Activated T-helper 1 cell treated with anti-CD3 and anti-CD28 coated beads, Interleukin-12 subunit alpha, Interleukin-12 subunit beta, Interleukin-2, Interleukin-4 antibody, amounts not matched to agents 30 ng/mL and 10 ng/mL and 1 ng/mL, durations not matched to agents 14 hours and 24 hours and 36 hours (primary cell): ENCODE measurements at regions of chr10 and their contacts with region 1.

Region 1: DNA sequence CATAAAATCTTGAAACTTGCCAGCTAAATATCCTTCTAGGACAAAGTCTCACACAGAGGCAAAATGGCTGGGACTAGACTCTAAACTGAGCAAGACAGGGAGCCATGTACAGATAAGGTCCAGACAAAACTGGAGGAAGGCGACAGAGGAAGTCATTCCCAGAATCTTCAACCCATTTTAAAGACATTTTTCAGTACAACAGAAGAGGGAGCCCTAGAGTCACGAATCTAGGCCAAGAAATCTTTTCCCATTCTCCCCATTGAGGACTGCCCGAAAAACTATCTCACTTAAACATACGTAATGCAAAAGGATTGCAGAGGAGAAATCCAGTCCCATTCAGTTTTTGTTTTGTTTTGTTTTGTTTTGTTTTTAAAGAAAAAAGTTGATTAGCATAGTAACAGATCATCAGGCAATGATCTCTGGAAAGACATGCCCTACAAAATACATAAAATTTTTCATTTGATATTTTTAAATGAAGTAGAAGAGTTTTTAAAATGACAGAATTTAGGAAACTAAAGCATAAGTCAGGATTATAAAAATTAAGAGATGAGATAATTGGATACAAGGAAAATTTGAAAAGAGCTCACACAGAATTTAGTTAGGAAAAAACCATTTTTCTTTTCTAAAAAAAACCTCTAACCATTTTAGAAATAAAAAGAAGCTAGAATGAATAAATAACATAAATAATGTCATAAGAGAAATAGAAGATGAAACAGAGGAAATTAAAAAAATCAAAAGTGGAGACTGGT is 16.9 kb upstream of the PRF1 start:
- DNase-seq: no peak
- H3K4me3 Mint-ChIP-seq: no peak overlapping the region
- H3K27ac Mint-ChIP-seq: peak overlapping the region; percentile 88
- H3K4me1 Mint-ChIP-seq: peaks cover 44% of the 10 kb centered on the region
- H3K27me3 Mint-ChIP-seq: peaks cover 7% of the 10 kb centered on the region

Region 2: GRCh38 chr10:70440296-70441160 is 178.9 kb before region 1 on chr10:
- intact Hi-C with region 1: no loop called
- DNase-seq: no peak
- H3K4me3 Mint-ChIP-seq: peak overlapping the region; percentile 4
- H3K27ac Mint-ChIP-seq: no peak overlapping the region
- H3K4me1 Mint-ChIP-seq: peaks cover 7% of the 10 kb centered on the region
- H3K27me3 Mint-ChIP-seq: peaks cover 52% of the 10 kb centered on the region

Region 3: GRCh38 chr10:70478191-70479164 is 141.0 kb before region 1 on chr10 and contains the start of gene PALD1:
- intact Hi-C with region 1: loop called (anchors 5 kb)
- DNase-seq: no peak
- H3K4me3 Mint-ChIP-seq: peak within 1 kb of the TSS; percentile 78
- H3K27ac Mint-ChIP-seq: peak within 1 kb of the TSS; percentile 85
- H3K4me1 Mint-ChIP-seq: peaks cover 49% of the 10 kb centered on the region
- H3K27me3 Mint-ChIP-seq: peaks cover 59% of the 10 kb centered on the region
- total RNA-seq, gene PALD1: 0.83 and 0.88 TPM in 2 replicates

Region 4: DNA sequence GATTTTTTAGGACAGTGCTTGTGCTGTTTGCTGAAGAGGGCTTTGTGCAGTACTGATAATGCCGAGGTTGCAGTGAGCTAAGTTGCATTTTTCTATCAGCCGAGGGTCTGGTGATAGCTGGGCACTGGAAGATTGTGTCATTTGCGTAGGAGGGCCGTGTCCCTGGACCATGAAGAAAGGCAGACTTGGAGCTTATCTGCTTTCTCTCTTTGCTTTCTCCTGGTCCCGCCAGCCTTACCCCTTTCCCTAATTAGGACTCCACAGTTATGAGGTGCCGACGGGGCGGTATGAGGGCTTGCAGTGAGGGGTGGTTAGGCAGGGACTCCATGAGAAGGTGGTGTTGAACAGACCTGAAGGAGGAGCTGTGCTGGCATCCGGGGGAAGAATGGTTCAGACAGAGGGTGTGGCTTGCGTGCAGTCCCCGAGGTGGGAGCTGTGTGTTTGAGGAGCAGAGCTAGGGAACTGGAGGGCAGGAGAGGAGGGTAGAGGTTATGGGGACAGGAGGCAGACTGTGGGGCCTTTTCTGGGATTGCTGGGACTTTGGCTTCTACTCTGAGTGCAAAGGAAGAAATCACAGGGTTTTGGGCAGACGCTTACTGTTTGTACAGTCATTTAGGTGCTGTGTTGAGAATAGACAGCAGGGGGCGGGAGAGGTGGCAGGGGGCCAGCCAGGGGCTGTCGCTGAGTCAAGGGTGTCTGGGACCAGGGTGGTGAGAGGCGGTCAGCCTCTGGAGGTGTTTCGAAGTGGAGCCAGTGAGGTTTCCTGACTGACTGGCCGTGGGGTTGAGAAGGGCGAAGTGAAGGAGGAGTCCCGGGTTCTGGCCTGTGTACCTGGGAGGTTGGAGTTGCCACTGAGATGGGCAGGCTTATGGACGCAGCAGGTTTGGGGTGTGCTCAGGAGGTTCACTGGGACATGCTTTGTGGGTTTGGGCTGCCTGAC is 60.3 kb before region 1 on chr10:
- intact Hi-C with region 1: loop called (anchors 1 kb)
- DNase-seq: peak; percentile 50
- H3K4me3 Mint-ChIP-seq: peak overlapping the region; percentile 67
- H3K27ac Mint-ChIP-seq: peak overlapping the region; percentile 65
- H3K4me1 Mint-ChIP-seq: peaks cover 27% of the 10 kb centered on the region
- H3K27me3 Mint-ChIP-seq: no peaks in the 10 kb centered on the region

Region 5: GRCh38 chr10:70602665-70603448 is 16.6 kb before region 1 on chr10 and contains the start of gene PRF1:
- intact Hi-C with region 1: loop called (anchors 1 kb)
- DNase-seq: peak; percentile 66
- H3K4me3 Mint-ChIP-seq: peak within 1 kb of the TSS; percentile 95
- H3K27ac Mint-ChIP-seq: peak within 1 kb of the TSS; percentile 97
- H3K4me1 Mint-ChIP-seq: peaks cover 32% of the 10 kb centered on the region
- H3K27me3 Mint-ChIP-seq: no peaks in the 10 kb centered on the region
- total RNA-seq, gene PRF1: 100 and 103 TPM in 2 replicates

Region 6: DNA sequence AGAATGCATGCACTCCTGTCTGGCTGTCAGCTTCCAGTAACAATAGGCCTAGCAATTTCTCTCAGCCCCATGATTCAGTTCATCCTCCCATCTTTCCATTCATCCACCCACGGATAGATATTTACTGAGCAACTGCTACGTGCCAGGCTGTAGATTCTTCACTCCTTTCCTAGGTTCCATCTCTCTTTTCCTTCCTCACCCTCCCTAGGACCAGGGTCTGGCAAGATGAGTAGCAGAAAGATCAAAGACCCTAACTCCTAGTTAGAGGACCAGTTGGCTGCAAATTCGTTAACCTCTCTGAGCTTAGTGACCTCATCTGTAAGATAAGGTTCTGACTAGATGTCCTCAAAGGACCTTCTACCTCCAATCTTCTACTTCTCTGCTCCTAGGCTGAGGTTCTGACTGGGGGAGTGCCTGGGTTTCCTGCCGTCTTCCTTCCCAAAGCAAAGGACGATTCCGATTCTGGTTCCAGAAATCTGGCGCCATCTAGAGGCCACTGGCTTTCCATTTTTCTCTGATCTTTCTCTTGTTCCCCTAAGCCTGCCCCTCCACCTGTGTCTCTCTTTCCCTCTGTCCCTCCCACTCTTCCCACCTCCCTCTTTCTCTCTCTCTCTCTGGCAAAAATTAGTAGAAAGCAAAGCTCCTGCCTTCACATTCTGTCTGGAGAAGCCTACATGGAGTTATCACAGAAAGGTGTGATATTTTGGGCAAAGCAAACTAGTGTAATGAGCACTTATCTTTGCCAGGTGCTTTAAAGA is 139.5 kb after region 1 on chr10:
- intact Hi-C with region 1: loop called (anchors 1 kb)
- DNase-seq: peak; percentile 49
- H3K4me3 Mint-ChIP-seq: no peak overlapping the region
- H3K27ac Mint-ChIP-seq: no peak overlapping the region
- H3K4me1 Mint-ChIP-seq: peaks cover 9% of the 10 kb centered on the region
- H3K27me3 Mint-ChIP-seq: no peaks in the 10 kb centered on the region

Region 7: DNA sequence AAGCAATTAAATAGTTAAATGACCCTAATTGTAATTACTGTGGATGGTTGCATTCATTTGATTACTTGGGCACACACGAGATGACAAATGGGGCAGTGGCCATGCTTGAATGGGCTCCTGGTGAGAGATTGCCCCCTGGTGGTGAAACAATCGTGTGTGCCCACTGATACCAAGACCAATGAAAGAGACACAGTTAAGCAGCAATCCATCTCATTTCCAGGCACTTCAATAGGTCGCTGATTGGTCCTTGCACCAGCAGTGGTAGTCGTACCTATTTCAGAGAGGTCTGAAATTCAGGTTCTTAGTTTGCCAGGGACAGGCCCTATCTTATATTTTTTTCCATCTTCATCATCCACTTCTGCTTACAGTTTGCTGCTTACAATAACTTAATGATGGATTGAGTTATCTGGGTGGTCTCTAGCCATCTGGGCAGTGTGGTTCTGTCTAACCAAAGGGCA is 260.7 kb after region 1 on chr10:
- intact Hi-C with region 1: loop called (anchors 1 kb)
- DNase-seq: peak; percentile 65
- H3K4me3 Mint-ChIP-seq: no peak overlapping the region
- H3K27ac Mint-ChIP-seq: no peak overlapping the region
- H3K4me1 Mint-ChIP-seq: peaks cover 11% of the 10 kb centered on the region
- H3K27me3 Mint-ChIP-seq: no peaks in the 10 kb centered on the region

Region 8: DNA sequence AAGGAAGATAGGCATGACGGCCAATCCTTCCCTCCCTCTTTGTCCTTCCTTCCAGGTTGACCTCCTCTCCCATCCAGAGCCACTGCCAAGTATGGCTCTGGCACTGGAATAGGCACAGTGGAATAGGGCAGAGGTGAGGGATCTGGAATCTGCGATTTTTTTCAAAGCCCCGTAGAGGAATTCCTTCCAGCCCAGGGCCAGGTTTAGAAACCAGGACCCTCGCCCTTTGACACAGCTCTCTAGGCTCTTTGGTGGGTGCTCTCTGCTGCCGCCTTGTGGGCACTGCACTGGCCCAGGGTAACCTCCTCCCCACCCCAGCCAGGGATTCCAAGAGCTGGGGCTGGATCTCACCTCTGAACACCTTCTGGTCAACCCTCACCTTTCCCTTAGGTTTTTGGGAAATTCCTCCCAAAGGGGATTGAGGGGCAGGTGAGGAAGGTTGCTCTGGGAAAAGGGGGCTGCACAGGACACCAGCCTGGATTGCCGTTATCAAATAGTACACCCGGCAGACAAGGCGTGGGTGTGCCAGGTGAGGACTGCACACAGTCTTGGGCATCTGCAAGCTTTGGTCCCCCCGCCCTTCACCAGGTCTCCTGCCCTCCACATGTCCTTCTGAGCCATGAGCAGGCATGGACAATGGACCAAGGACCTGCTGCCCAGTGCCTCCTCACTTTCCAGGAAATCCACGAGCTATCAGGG is 1077.3 kb after region 1 on chr10:
- intact Hi-C with region 1: no loop called
- DNase-seq: peak; percentile 41
- H3K4me3 Mint-ChIP-seq: no peak overlapping the region
- H3K27ac Mint-ChIP-seq: no peak overlapping the region
- H3K4me1 Mint-ChIP-seq: peaks cover 53% of the 10 kb centered on the region
- H3K27me3 Mint-ChIP-seq: no peaks in the 10 kb centered on the region